Activated CD4-positive, alpha-beta T cell treated with anti-CD3 and anti-CD28 coated beads for 36 hours (primary cell): ENCODE measurements at regions of chr13 and their contacts with region 1.

Region 1: DNA sequence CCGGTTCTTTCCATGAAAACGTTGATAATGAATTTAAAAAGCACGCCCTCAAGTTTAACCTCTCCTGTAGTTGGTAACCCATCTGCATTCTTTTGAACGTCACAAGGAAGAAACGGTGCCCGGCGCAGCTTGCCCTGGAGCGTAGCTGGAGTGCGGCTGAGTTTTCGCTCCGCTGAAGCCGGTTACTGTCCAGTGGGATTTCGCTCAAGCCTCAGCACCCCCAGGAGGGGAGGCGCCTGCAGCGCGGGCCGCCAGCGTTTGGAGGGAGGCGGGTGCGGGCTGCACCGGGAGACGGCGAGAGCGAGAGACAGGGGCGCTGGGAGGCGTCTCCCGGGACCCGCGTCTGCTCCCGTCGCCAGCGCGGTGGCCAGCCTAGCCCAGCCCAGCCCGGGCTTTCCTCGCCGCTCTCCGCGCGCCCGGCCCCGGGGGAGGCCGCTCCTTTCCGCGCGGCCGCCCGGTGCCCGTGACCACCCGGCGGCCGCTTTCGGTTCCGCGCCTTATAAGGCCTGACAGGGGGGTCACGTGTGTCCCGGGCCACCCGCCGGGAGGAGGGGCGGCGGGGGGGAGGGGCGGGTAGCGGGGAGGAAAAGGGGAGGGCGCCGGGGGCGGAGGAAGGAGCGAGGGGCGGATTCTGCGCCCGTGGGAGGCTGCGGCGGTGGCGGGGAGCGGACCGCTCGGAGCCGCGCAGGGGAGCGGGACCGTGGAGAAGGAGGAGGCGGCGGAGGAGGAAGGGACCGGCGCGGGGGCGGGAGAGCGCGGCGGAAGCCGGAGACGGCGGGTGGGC is 8.3 kb upstream of the DGKH start:
- DNase-seq: peak; percentile 92
- ATAC-seq: peak; percentile 77
- H3K4me3 Mint-ChIP-seq: peak overlapping the region; percentile 74
- H3K27ac Mint-ChIP-seq: peak overlapping the region; percentile 76
- H3K4me1 Mint-ChIP-seq: peaks cover 23% of the 10 kb centered on the region
- H3K27me3 Mint-ChIP-seq: peaks cover 5% of the 10 kb centered on the region

Region 2: GRCh38 chr13:41132512-41133152 is 907.5 kb before region 1 on chr13 and contains the start of gene KBTBD6:
- CTCF ChIA-PET with region 1: no interaction called
- POLR2A ChIA-PET with region 1: no interaction called
- intact Hi-C with region 1: loop called in 1 of 2 experiments (anchors 10 kb)
- DNase-seq: peak; percentile 98
- ATAC-seq: peak; percentile 95
- H3K4me3 Mint-ChIP-seq: peak within 1 kb of the TSS; percentile 92
- H3K27ac Mint-ChIP-seq: peak within 1 kb of the TSS; percentile 93
- H3K4me1 Mint-ChIP-seq: peaks cover 46% of the 10 kb centered on the region
- H3K27me3 Mint-ChIP-seq: no peaks in the 10 kb centered on the region
- total RNA-seq, gene KBTBD6: 3.4 to 4.4 TPM

Region 3: DNA sequence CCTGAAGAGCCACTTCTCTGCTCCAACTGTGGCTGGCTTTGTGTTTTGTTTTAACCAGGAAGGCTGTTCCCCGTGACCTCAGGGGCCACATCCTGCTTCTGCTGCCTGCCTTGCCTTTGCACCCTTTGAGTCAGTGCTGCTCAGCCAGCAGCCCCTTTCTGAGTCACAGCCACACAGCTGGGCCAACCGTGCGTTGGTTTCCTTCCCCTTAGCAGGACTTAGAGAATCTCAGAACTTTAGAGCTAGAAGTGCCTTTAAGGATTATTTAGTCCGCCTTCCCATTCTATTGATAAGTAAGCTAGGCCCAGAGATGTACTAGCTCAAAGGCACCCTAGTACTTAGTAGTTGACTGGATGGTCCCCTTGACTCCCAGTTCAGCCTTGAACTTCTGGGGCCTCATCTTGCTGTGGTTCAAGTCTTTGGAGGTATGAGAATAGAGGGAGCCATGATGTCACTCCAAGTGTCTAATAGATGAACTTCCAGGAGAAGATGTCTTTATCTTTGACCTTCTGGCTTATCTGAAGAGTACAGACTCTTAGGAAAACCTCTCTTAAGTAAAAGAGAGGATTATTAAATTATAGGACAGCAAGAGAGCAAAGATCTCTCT is 574.8 kb before region 1 on chr13:
- CTCF ChIA-PET with region 1: no interaction called
- POLR2A ChIA-PET with region 1: no interaction called
- intact Hi-C with region 1: loop called in 1 of 2 experiments (anchors 10 kb)
- DNase-seq: peak; percentile 95
- ATAC-seq: peak; percentile 84
- H3K4me3 Mint-ChIP-seq: peak overlapping the region; percentile 82
- H3K27ac Mint-ChIP-seq: peak overlapping the region; percentile 98
- H3K4me1 Mint-ChIP-seq: peaks cover 91% of the 10 kb centered on the region
- H3K27me3 Mint-ChIP-seq: no peaks in the 10 kb centered on the region

Region 4: DNA sequence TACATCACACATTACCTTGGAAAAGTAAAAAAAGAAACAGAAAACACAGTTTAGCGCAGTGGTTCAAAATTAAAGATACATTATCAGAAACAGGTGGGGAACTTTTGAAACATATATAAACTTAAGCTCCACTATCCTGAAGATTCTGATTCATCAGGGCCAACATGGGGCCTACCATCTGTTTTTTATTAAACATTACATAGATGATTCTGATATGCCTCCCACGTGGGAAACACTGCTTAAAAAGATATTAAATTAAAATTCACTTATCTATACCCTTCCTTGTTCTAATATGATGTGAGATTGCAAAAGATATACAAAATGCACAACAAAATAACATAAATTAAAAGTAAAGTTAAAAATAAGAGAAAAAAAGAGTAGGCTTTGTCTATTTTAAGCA is 204.3 kb before region 1 on chr13:
- CTCF ChIA-PET with region 1: no interaction called
- POLR2A ChIA-PET with region 1: no interaction called
- intact Hi-C with region 1: no loop called
- DNase-seq: no peak
- ATAC-seq: no peak
- H3K4me3 Mint-ChIP-seq: no peak overlapping the region
- H3K27ac Mint-ChIP-seq: no peak overlapping the region
- H3K4me1 Mint-ChIP-seq: peaks cover 4% of the 10 kb centered on the region
- H3K27me3 Mint-ChIP-seq: no peaks in the 10 kb centered on the region

Region 5: DNA sequence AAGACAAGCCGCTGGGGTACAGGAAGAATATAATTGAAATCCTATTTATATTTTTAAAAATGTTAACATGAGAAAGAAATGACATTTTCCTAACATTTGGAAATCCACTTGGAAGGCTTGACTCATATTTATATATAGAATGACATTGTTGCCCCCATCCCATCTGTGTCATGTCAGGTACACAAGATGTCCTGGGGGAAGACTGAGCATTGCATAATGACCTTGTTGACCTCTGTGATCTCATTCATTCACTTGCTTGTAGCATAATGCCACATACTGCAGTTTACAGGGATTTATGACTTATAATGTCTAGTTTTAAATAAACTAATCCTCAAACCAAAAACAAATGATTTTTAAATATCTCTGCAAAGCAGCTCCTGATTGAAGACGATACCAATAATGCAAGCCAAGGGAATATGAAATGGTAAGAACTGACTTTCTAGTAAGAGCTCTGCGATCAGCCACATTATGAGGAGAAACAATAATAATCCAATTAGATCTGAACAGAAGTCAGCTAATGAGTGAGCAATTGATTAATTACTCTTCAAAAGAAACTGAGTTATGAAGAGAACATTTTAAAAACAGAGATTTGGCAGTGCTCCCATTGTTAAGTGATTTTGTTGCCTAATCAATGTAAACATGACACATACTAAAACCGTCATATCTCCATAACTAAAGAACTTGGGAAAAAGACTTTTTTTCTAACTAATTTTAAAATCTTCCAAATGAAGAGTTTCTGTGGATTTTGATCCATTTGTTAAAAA is 58.0 kb before region 1 on chr13:
- CTCF ChIA-PET with region 1: interaction called, 3 read pairs
- POLR2A ChIA-PET with region 1: no interaction called
- intact Hi-C with region 1: loop called in 1 of 2 experiments (anchors 2 kb)
- DNase-seq: no peak
- ATAC-seq: no peak
- H3K4me3 Mint-ChIP-seq: no peak overlapping the region
- H3K27ac Mint-ChIP-seq: no peak overlapping the region
- H3K4me1 Mint-ChIP-seq: peaks cover 16% of the 10 kb centered on the region
- H3K27me3 Mint-ChIP-seq: peaks cover 7% of the 10 kb centered on the region